K562 (cell line): ENCODE measurements at regions of chr5 and their contacts with region 1.

Region 1: DNA sequence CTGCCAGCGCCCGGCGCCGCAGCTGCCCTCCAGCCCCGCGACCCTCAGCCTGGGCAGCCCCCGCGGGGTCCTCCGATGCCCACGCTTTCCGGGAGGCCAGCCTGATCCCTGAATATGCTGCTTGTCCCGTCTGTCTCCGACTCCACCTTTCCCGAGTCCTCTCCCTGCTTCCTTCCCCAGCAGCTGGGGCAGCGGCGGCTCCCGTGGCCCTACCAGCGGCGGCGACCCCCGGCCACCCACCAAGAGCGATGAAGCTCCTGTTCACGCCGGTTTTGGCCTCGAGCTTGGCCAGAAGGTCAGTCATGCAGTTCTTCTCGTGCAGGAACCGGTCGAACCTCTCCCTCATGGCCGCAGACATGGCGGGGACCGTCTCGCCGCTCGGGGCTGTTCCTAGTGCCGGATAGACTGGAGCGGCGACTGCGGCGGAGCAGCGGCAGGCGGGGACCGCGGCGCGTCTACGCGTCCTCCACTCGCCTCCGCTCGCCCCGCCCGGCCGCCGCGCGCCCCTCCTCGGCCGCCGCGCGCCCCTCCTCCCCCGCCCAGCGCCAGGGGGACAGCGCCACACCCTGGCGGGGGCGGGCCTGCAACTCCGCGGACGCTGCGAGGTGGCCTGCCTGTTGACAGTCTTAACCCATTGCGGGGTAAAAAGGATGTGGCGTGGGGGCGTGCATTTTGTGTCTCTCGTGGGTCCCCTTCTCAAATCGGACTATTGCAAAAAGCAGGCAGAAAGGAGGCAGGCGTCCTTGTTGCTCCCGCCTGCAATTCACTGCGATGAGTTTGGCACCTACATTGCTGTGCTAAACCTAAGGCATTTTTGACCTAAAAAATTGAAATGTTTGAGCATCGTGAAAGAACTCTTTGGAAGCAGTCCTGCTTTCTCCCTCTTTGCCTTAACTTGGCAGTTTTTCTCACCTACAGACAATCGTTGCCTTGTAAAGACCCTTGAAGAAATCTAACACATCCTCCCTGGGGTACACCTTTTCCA is at the start of gene REEP5:
- DNase-seq: peak; percentile 90 to 93 (median 92)
- ATAC-seq: peak; percentile 91
- H3K4me3 ChIP-seq: peak within 1 kb of the TSS; percentile 92
- H3K27ac ChIP-seq: peak within 1 kb of the TSS; percentile 89
- H3K4me1 ChIP-seq: peaks cover 18 to 20% of the 10 kb centered on the region in 2 experiments
- H3K27me3 ChIP-seq: no peaks in the 10 kb centered on the region
- CTCF ChIP-seq: peak; percentile 62 to 88 (median 79)
- EP300 ChIP-seq: no peak
- POLR2A ChIP-seq: peak; percentile 91
- RAD21 ChIP-seq: peak; percentile 72 to 86
- polyA plus RNA-seq, gene REEP5: 100 to 102 TPM

Region 2: DNA sequence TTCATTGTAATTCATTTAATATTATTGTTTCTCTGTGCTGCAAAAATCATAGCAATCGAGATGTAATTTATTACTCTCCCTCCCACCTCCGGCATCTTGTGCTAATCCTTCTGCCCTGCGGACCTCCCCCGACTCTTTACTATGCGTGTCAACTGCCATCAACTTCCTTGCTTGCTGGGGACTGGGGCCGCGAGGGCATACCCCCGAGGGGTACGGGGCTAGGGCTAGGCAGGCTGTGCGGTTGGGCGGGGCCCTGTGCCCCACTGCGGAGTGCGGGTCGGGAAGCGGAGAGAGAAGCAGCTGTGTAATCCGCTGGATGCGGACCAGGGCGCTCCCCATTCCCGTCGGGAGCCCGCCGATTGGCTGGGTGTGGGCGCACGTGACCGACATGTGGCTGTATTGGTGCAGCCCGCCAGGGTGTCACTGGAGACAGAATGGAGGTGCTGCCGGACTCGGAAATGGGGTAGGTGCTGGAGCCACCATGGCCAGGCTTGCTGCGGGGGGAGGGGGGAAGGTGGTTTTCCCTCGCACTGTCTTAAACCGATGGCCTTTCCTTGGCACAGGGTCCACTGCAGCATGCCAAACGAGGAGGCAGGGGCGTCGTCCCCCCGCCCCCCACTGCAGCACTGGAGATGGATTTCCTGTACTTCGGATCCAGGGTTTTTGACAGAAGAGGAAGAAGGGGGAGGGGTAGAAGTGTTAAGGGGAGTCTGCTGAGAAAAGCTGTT is 184.5 kb before region 1 on chr5 and contains the start of gene APC:
- CTCF ChIA-PET with region 1: no interaction called
- POLR2A ChIA-PET with region 1: no interaction called
- in situ Hi-C with region 1: no loop called
- intact Hi-C with region 1: loop called (anchors 5 kb)
- DNase-seq: peak; percentile 91 to 95 (median 93)
- ATAC-seq: peak; percentile 93
- H3K4me3 ChIP-seq: peak within 1 kb of the TSS; percentile 50
- H3K27ac ChIP-seq: peak within 1 kb of the TSS; percentile 79
- H3K4me1 ChIP-seq: peaks cover 17 to 20% of the 10 kb centered on the region in 2 experiments
- H3K27me3 ChIP-seq: no peaks in the 10 kb centered on the region
- CTCF ChIP-seq: 0 out of 6 replicates have a peak, but pooled peaks of 2 of the 3 experiments have one; percentile 5
- EP300 ChIP-seq: peak; percentile 34; the same call in 1 of the 2 replicates
- POLR2A ChIP-seq: peak; percentile 80
- RAD21 ChIP-seq: no peak
- polyA plus RNA-seq, gene APC: 5.7 to 9.3 TPM

Region 3: DNA sequence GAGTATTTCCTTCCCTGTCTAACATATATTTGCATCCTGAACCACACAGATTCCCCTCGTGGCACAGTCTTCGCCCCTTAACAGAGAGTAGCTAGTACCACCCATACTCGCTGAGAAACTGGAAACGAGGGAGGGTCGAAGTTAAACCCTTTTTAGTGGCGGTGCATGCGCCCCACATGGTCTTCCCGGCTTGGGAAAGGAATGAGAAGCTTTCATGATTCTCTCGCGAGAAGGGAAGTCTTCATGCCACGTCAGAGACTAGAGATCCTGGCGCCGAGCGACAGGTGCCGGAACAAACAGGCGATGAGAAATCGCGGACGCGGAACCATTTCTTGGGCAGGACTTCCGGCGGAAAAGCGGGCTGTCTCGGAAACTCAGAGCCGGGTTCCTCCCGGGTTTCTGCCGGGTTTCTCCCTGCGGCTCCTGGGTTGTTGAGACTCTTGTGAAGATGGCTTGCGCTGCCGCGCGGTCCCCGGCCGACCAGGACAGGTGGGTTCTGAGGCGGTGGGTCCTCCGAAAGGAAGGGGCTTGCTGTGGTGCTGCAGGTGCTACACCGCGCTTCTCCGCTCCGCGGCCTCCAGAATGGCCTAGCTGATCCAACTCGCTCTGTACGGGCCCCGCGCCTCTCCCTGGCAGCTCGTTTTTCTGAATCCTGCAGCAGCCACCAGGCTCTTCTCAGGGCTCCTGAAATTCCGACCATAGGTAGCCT is 61.0 kb before region 1 on chr5 and contains the start of gene SRP19:
- CTCF ChIA-PET with region 1: no interaction called
- POLR2A ChIA-PET with region 1: interaction called, 4 read pairs
- in situ Hi-C with region 1: no loop called
- intact Hi-C with region 1: loop called (anchors 1 kb)
- DNase-seq: peak; percentile 88 to 98 (median 92)
- ATAC-seq: peak; percentile 98
- H3K4me3 ChIP-seq: peak within 1 kb of the TSS; percentile 82
- H3K27ac ChIP-seq: peak within 1 kb of the TSS; percentile 81
- H3K4me1 ChIP-seq: peaks cover 0 to 12% of the 10 kb centered on the region in 2 experiments; a peak in 2 of 5 replicates
- H3K27me3 ChIP-seq: no peaks in the 10 kb centered on the region
- CTCF ChIP-seq: no peak
- EP300 ChIP-seq: peak; percentile 31; the same call in 1 of the 2 replicates
- POLR2A ChIP-seq: peak; percentile 86
- RAD21 ChIP-seq: peak in 1 of 2 experiments; percentile 1; a peak in 1 of 4 replicates
- polyA plus RNA-seq, gene SRP19: 287 to 357 TPM

Region 4: DNA sequence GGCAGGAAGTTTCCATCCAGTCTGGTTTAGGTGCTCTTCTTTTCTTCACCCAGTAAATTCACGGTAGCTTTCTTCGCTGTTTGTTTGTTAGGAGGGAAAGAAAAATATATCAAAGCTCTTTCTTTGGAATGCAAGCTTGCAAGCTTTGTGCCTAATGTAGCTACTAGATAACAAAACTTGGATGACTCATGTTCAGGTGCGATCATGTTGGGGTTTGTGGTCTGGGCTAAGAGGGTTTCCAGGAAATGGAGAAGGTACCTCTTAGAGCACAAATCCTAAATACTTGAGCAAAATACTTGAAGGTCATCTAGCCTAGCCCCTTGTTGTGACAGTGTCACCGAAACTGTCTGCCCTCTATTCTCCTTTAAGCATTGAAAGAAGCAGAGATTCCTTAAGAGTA is 43.4 kb before region 1 on chr5:
- CTCF ChIA-PET with region 1: no interaction called
- POLR2A ChIA-PET with region 1: interaction called, 4 read pairs
- in situ Hi-C with region 1: no loop called
- intact Hi-C with region 1: loop called (anchors 5 kb)
- DNase-seq: peak; percentile 29 to 76 (median 42)
- ATAC-seq: peak; percentile 71
- H3K4me3 ChIP-seq: no peak overlapping the region
- H3K27ac ChIP-seq: 0 out of 3 replicates have a peak overlapping the region, but pooled peaks have one; percentile 29
- H3K4me1 ChIP-seq: peaks cover 0 to 16% of the 10 kb centered on the region in 2 experiments; a peak in 3 of 5 replicates
- H3K27me3 ChIP-seq: no peaks in the 10 kb centered on the region
- CTCF ChIP-seq: no peak
- EP300 ChIP-seq: peak; percentile 80
- POLR2A ChIP-seq: no peak
- RAD21 ChIP-seq: no peak

Region 5: GRCh38 chr5:112968411-112969106 is 46.4 kb after region 1 on chr5:
- CTCF ChIA-PET with region 1: no interaction called
- POLR2A ChIA-PET with region 1: interaction called, 3 read pairs
- in situ Hi-C with region 1: no loop called
- intact Hi-C with region 1: loop called (anchors 1 kb)
- DNase-seq: no peak
- ATAC-seq: peak; percentile 15
- H3K4me3 ChIP-seq: no peak overlapping the region
- H3K27ac ChIP-seq: peak overlapping the region; percentile 81; the same call in 2 of the 3 replicates
- H3K4me1 ChIP-seq: peaks cover 4 to 25% of the 10 kb centered on the region in 2 experiments; a peak in 3 of 5 replicates
- H3K27me3 ChIP-seq: no peaks in the 10 kb centered on the region
- CTCF ChIP-seq: no peak
- EP300 ChIP-seq: no peak
- POLR2A ChIP-seq: no peak
- RAD21 ChIP-seq: no peak

Region 6: GRCh38 chr5:112976432-112977309 is 54.5 kb after region 1 on chr5 and contains the start of gene DCP2:
- CTCF ChIA-PET with region 1: no interaction called
- POLR2A ChIA-PET with region 1: interaction called, 7 read pairs
- in situ Hi-C with region 1: no loop called
- intact Hi-C with region 1: loop called (anchors 1 kb)
- DNase-seq: peak; percentile 95 to 99 (median 98)
- ATAC-seq: peak; percentile 88
- H3K4me3 ChIP-seq: peak within 1 kb of the TSS; percentile 64
- H3K27ac ChIP-seq: peak within 1 kb of the TSS; percentile 86
- H3K4me1 ChIP-seq: peaks cover 17 to 36% of the 10 kb centered on the region in 2 experiments
- H3K27me3 ChIP-seq: no peaks in the 10 kb centered on the region
- CTCF ChIP-seq: no peak
- EP300 ChIP-seq: no peak; the same call in 1 of the 2 replicates
- POLR2A ChIP-seq: peak; percentile 97
- RAD21 ChIP-seq: no peak
- polyA plus RNA-seq, gene DCP2: 25.9 to 36.8 TPM

Region 7: DNA sequence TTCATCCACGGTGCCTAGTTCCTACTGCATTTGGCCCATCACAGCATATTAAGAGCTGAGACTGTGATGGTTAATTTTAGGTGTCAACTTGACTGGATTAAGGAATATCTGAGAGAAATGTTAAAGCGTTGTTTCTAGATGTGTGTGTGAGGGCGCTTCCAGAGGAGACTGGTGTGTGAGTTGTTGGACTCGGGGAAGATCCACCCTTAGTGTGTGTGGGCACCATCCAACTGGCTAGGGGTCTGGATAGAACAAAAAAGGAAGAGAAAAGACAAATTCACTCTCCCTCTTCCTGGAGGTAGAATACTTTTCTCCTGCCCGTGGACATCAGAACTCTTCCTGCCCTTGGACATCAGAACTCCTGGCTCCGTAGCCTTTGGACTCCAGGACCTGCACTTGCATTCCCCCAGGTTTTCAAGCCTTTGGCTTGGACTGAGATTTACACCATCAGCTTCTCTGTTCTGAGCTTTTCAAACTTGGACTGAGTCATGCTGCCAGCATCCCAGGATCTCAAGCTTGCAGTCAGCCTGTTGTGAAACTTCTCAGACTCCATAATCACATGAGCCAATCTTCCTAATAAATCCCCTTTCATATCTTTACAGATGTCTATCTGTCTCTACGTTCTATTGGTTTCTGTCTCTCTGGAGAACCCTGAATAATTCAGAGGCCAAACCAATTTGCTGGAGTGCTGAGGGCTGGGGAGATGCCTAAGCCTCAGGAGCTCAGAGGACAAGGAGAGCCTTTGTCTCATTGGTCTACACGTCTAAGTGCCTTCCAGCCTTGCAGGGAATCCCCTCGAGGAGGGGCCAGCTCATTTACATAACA is 218.9 kb after region 1 on chr5:
- CTCF ChIA-PET with region 1: no interaction called
- POLR2A ChIA-PET with region 1: no interaction called
- in situ Hi-C with region 1: no loop called
- intact Hi-C with region 1: no loop called
- DNase-seq: no peak
- ATAC-seq: no peak
- H3K4me3 ChIP-seq: no peak overlapping the region
- H3K27ac ChIP-seq: no peak overlapping the region
- H3K4me1 ChIP-seq: no peaks in the 10 kb centered on the region
- H3K27me3 ChIP-seq: peaks cover 4 to 23% of the 10 kb centered on the region in 2 experiments; a peak in 3 of 5 replicates
- CTCF ChIP-seq: no peak
- EP300 ChIP-seq: no peak
- POLR2A ChIP-seq: no peak
- RAD21 ChIP-seq: no peak